ENCODE measurements at regions of chr4 and their contacts with region 1.

Region 1: GRCh38 chr4:36351082-36351666 is 69.8 kb downstream of the DTHD1 start:
- DNase-seq: peak; percentile 85
- H3K4me3 Mint-ChIP-seq: no peak overlapping the region
- H3K27ac Mint-ChIP-seq: no peak overlapping the region
- H3K4me1 Mint-ChIP-seq: peaks cover 29% of the 10 kb centered on the region
- H3K27me3 Mint-ChIP-seq: no peaks in the 10 kb centered on the region

Region 2: DNA sequence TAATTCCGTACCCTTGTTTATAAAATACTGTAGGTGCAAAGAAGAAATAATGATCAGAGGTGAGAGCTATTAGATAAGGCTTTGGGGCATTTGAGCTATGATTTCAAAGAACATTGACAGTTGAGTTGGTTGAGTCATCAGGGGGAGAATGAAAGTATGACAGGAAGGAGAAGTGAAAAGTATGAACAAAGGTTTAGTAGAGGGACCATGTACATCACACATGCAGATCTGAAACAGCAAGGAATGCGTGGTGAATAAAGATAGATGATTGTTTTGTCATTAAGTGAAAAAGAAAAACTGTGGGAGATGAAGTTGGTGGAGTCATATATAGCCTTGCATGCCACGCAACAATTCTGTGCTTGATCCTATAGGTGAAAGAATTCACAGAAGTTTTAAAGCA is 270.0 kb before region 1 on chr4:
- CTCF ChIA-PET with region 1: no interaction called
- POLR2A ChIA-PET with region 1: no interaction called
- intact Hi-C with region 1: loop called (anchors 1 kb)
- DNase-seq: peak; percentile 37
- H3K4me3 Mint-ChIP-seq: no peak overlapping the region
- H3K27ac Mint-ChIP-seq: no peak overlapping the region
- H3K4me1 Mint-ChIP-seq: peaks cover 7% of the 10 kb centered on the region
- H3K27me3 Mint-ChIP-seq: no peaks in the 10 kb centered on the region

Region 3: DNA sequence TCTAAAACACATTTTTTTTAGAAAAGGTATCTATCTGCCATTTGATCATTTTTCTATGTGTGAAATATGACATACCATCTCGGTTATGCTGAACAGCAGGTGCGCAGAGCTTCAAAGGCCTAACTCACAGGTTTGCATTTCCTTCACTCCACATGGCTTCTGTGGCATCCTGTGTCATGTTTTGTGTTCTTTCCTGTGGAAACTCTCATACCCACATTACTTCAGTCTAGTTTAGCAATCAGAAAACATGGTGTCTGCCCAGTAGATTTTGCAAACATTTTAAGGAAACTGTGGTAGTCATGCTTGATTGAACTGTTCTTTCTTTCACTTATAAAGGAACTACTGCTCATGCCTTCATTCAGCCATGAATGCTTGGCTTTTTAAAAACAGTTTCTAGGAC is 95.6 kb before region 1 on chr4:
- CTCF ChIA-PET with region 1: interaction called, 6 read pairs
- POLR2A ChIA-PET with region 1: no interaction called
- intact Hi-C with region 1: loop called (anchors 1 kb)
- DNase-seq: peak; percentile 75
- H3K4me3 Mint-ChIP-seq: peak overlapping the region; percentile 65
- H3K27ac Mint-ChIP-seq: peak overlapping the region; percentile 95
- H3K4me1 Mint-ChIP-seq: peaks cover 44% of the 10 kb centered on the region
- H3K27me3 Mint-ChIP-seq: no peaks in the 10 kb centered on the region

Region 4: GRCh38 chr4:36320117-36320896 is 30.9 kb before region 1 on chr4:
- CTCF ChIA-PET with region 1: interaction called, 3 read pairs
- POLR2A ChIA-PET with region 1: interaction called, 4 read pairs
- intact Hi-C with region 1: loop called (anchors 1 kb)
- DNase-seq: no peak
- H3K4me3 Mint-ChIP-seq: no peak overlapping the region
- H3K27ac Mint-ChIP-seq: peak overlapping the region; percentile 67
- H3K4me1 Mint-ChIP-seq: peaks cover 79% of the 10 kb centered on the region
- H3K27me3 Mint-ChIP-seq: no peaks in the 10 kb centered on the region

Region 5: GRCh38 chr4:36394352-36394903 is 43.3 kb after region 1 on chr4:
- CTCF ChIA-PET with region 1: interaction called, 91 read pairs
- POLR2A ChIA-PET with region 1: interaction called, 5 read pairs
- intact Hi-C with region 1: loop called (anchors 1 kb)
- DNase-seq: peak; percentile 60
- H3K4me3 Mint-ChIP-seq: peak overlapping the region; percentile 48
- H3K27ac Mint-ChIP-seq: peak overlapping the region; percentile 94
- H3K4me1 Mint-ChIP-seq: peaks cover 23% of the 10 kb centered on the region
- H3K27me3 Mint-ChIP-seq: peaks cover 2% of the 10 kb centered on the region

Region 6: DNA sequence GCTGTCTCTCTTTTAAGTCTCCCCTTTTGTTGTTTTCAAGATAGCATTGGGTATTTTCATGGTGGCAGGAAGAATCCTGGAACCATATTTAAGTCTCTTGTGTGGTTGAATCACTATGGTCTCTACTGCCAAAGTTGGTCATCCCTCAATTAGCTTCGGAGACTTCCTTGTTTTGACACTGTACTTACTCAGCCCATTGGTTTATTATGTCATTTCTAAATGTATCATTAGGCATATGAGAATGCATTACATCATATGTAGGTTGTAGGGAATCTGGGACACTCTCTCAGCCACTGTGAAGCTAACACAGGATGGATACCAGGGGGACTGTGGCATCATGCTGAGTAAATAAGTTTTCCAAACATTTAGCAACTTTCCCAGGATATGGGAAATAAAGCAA is 142.1 kb after region 1 on chr4:
- CTCF ChIA-PET with region 1: no interaction called
- POLR2A ChIA-PET with region 1: no interaction called
- intact Hi-C with region 1: no loop called
- DNase-seq: no peak
- H3K4me3 Mint-ChIP-seq: no peak overlapping the region
- H3K27ac Mint-ChIP-seq: no peak overlapping the region
- H3K4me1 Mint-ChIP-seq: no peaks in the 10 kb centered on the region
- H3K27me3 Mint-ChIP-seq: no peaks in the 10 kb centered on the region

Region 7: DNA sequence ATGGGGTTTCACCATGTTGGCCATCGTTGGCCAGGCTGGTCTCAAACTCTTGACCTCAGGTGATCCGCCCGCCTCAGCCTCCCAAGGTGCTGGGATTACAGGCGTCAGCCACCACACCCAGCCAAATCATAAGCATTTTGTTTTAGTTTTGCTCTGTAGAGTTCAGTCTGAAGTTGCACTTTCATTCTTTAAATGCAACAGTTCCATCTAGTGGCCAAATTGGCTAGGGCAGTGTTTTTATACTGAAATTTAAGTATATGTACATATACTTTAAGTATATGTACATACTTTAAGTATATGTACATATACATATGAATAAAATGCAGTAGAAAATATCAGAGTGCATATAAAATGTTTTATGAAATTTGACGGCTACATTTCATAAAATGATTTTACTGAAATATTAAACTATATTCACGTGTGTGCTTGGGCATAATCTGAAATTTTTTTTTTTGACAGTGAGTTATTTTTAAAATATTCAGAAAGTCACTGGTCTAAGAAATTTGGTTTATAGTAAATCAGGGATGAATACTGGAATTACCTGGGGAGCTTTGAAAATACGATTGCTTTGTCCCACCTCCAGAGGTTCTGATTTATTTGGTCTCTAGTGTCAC is 1038.9 kb after region 1 on chr4:
- CTCF ChIA-PET with region 1: no interaction called
- POLR2A ChIA-PET with region 1: no interaction called
- intact Hi-C with region 1: loop called (anchors 1 kb)
- DNase-seq: no peak
- H3K4me3 Mint-ChIP-seq: no peak overlapping the region
- H3K27ac Mint-ChIP-seq: no peak overlapping the region
- H3K4me1 Mint-ChIP-seq: no peaks in the 10 kb centered on the region
- H3K27me3 Mint-ChIP-seq: peaks cover 5% of the 10 kb centered on the region

Measured in activated CD4-positive, alpha-beta memory T cell treated with anti-CD3 and anti-CD28 coated beads for 36 hours (primary cell).